ENCODE measurements at regions of chr17 and their contacts with region 1.

Region 1: GRCh38 chr17:13353590-13353989 is 248.1 kb downstream of the HS3ST3A1 start:
- DNase-seq: no peak

Region 2: DNA sequence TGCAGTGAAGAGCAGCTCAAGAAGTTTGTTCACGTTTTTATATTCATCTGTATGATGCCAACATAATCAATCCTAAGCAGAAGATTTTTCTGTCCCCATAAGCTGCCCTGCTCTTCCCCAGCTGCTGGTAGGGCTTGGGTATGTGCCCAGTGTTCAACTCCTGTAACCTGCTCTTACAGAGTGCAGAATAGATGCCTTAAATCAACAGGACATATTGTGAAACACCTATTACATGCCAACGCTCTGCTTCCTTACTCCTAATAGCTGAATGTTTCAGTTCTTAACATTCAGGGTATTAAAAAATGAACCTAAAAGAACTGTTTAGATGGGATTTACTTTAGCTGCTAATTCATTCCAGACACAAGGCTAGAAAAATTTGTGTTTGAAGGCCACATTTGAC is 57.3 kb after region 1 on chr17:
- intact Hi-C with region 1: loop called (anchors 5 kb)
- DNase-seq: no peak

Region 3: GRCh38 chr17:13538841-13539411 is 185.3 kb after region 1 on chr17:
- intact Hi-C with region 1: no loop called
- DNase-seq: no peak

Measured in cardiac septum (tissue), 1 donor.